ENCODE measurements at regions of chr16 and their contacts with region 1.

Region 1: DNA sequence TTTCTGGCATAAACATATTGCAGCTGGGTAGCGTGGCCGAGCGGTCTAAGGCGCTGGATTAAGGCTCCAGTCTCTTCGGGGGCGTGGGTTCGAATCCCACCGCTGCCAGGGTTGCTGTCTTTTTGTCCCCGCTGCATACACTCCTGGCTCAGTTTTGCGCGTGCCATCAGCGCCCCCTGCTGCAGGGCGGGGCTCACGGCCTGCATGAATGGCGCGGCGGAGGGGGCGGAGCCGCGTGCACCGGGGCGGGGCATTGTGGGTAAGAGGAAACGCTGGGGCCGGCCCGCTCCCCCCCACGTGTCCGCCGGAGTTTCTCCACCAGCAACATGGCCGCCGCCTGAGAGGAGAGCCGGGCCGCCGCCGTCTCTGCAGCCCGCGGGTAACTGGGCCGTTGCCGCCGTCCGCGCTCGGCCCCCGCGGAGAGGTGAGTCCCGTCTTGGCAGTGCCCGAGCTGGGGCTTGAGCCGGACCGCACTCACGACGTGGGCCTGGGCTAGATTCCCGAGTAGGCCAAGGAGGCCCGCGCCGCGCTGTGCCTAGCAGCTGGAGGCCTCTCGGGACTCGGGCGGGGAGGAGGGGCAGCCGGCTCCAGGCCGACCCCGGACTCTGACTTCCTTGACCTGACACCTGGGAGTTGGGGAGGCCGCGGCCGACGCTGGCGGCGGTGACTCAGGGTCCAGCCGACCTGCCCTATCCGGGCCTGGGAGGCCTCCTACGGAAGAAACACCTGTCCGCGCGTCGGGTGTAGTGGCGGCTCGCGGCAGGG is at the start of gene POLR3E:
- DNase-seq: peak; percentile 97 to 100 (median 99)

Region 2: DNA sequence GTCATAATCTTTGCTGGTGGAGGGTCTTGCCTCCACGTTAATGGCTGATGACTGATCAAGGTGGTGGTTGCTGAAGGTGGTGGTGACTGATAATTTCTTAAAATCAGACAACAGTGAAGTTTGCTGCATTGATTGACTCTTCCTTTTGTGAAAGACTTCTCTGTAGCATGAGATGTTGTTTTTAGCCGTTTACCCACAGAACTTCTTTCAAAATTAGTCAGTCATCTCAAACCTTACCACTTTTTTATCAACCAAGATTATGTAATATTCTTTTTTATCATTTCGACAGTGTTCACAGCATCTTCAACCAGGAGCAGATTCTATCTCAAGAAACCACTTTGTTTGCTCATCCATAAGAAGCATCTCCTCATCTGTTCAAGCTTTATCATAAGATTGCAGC is 338.2 kb before region 1 on chr16:
- intact Hi-C with region 1: loop called (anchors 5 kb)
- DNase-seq: no peak

Region 3: GRCh38 chr16:22007509-22008214 is 289.6 kb before region 1 on chr16 and contains the start of gene MOSMO:
- intact Hi-C with region 1: loop called (anchors 5 kb)
- DNase-seq: peak; percentile 52 to 92 (median 84)

Region 4: DNA sequence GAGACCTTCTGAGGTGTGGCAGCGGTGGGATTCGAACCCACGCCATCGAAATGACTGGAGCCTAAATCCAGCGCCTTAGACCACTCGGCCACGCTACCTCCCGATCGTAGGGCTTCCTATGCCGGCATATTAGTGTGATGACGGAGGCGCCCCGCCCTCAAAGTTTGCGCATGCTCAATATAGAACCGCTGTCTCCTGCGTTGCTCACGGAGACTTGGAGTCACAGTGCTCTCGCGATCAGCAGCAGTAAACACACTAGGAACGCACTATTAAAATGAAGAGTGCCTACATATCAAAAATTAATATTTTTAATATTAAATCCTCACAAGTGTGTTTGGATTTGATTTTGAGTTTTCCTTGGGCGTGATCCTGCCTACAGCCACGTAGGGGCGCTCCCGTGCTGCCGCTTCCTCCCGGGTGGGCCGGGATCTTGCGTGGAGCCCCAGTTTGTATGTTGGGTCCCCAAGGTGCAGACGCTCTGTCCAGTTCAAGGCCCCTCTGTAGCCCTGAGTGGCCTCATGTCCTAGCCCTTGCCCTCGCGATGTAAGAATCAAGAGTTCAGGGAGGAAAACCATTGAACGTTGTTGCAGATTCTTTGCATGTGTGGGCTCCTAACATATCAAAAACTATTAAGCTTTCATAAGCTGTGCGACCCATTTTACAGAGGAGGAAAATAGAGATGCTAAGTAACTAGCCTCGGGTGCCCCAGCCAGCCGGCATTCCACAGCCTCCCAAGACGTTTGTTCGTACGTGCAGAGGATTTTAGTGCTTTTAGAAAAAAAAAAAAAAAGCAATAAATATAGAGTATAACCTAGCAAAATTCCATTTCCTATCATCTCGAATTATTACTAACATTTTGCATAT is 101.4 kb before region 1 on chr16:
- intact Hi-C with region 1: loop called (anchors 2 kb)
- DNase-seq: peak; percentile 75 to 98 (median 93)

Region 5: GRCh38 chr16:22374311-22375116 is 77.2 kb after region 1 on chr16 and contains the start of gene CDR2:
- intact Hi-C with region 1: loop called (anchors 2 kb)
- DNase-seq: peak; percentile 94 to 100 (median 98)